AG04450 (cell line): ENCODE measurements at regions of chr6 and their contacts with region 1.

Region 1: GRCh38 chr6:78942446-78942845 is 75.1 kb downstream of the IRAK1BP1 start:
- DNase-seq: no peak
- H3K4me3 ChIP-seq: no peak overlapping the region
- H3K27ac ChIP-seq: no peak overlapping the region
- H3K27me3 ChIP-seq: no peaks in the 10 kb centered on the region
- CTCF ChIP-seq: no peak

Region 2: DNA sequence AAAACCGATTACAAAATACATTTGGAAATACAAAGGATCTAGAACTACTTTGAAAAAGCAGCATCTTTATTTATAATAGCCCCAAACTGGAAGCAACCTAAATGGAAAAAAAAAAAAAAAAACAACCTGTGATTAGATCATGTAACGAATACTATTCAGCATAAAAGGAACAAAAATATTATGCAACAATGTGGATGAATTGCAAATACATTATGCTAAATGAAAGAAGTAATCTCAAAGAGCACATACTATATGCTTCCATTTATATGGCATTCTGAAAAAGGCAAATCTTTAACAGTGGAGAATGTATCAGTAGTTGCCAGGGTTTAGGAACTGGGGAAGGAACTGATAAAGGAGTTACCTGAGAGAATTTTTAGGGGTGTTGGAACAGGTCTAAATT is 46.2 kb before region 1 on chr6:
- CTCF ChIA-PET with region 1: no interaction called
- POLR2A ChIA-PET with region 1: interaction called, 10 read pairs
- DNase-seq: no peak
- H3K4me3 ChIP-seq: no peak overlapping the region
- H3K27ac ChIP-seq: no peak overlapping the region
- H3K27me3 ChIP-seq: no peaks in the 10 kb centered on the region
- CTCF ChIP-seq: no peak